A673 (cell line): ENCODE measurements at regions of chr22 and their contacts with region 1.

Region 1: DNA sequence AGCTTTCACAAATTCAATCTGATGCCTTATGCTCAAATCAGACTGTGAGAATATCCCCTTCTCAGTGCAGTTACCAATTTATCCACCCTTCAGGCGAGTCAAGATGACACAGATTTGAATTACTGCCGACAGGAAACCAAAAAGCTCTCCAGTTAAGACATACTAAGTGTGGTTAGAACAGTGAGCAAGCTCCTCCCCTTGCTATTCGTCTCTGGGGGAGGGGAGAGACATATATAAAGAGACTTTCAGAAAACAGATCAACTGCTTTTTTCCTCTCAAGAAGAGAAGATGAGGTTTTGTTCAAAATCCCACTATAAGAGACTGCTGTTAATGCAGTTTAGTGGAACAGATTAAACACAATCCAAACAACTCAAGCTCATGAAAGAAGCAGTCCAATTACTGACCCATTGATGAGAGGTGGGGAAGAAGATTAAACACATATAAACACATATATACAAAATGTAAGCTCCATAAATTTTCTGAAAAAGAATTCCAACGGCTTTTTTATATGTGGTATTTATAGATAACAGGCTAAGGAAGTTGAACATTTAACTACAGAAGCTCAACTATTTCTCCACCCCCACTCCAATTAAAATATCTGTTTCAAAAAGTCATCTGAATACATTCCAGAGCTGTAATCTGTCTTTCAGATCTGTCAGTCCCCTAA is 102.7 kb downstream of the MRTFA start:
- DNase-seq: peak; percentile 92
- H3K4me3 ChIP-seq: peak overlapping the region; percentile 27
- H3K27ac ChIP-seq: peak overlapping the region; percentile 74
- H3K4me1 ChIP-seq: peaks cover 31% of the 10 kb centered on the region
- H3K27me3 ChIP-seq: no peaks in the 10 kb centered on the region
- CTCF ChIP-seq: no peak

Region 2: GRCh38 chr22:40509401-40510134 is 24.3 kb before region 1 on chr22:
- CTCF ChIA-PET with region 1: interaction called, 16 read pairs
- POLR2A ChIA-PET with region 1: no interaction called
- intact Hi-C with region 1: no loop called
- DNase-seq: no peak
- H3K4me3 ChIP-seq: no peak overlapping the region
- H3K27ac ChIP-seq: peak overlapping the region; percentile 26
- H3K4me1 ChIP-seq: peaks cover 30% of the 10 kb centered on the region
- H3K27me3 ChIP-seq: no peaks in the 10 kb centered on the region
- CTCF ChIP-seq: no peak

Region 3: GRCh38 chr22:40636380-40637182 is 102.7 kb after region 1 on chr22 and contains the start of gene MRTFA:
- CTCF ChIA-PET with region 1: no interaction called
- POLR2A ChIA-PET with region 1: no interaction called
- intact Hi-C with region 1: loop called (anchors 5 kb)
- DNase-seq: peak; percentile 100
- H3K4me3 ChIP-seq: peak within 1 kb of the TSS; percentile 96
- H3K27ac ChIP-seq: peak within 1 kb of the TSS; percentile 80
- H3K4me1 ChIP-seq: peaks cover 9% of the 10 kb centered on the region
- H3K27me3 ChIP-seq: no peaks in the 10 kb centered on the region
- CTCF ChIP-seq: no peak
- total RNA-seq, gene MRTFA: 35.8 and 41.2 TPM in 2 replicates